ENCODE measurements at regions of chr7 and their contacts with region 1.

Region 1: GRCh38 chr7:55441774-55442522 is 76.8 kb downstream of the LANCL2 start:
- DNase-seq: no peak

Region 2: GRCh38 chr7:55510621-55511020 is 68.7 kb after region 1 on chr7:
- intact Hi-C with region 1: loop called in 1 of 2 experiments (anchors 2 kb)
- DNase-seq: no peak